ENCODE measurements at regions of chr21 and their contacts with region 1.

Region 1: GRCh38 chr21:28516991-28517592 is 475.6 kb downstream of the LTN1 start:
- DNase-seq: peak; percentile 88
- H3K4me3 ChIP-seq: peak overlapping the region; percentile 5
- H3K27ac ChIP-seq: no peak overlapping the region
- H3K4me1 ChIP-seq: peaks cover 23% of the 10 kb centered on the region
- CTCF ChIP-seq: peak; percentile 89

Region 2: GRCh38 chr21:28480470-28480869 is 36.6 kb before region 1 on chr21:
- CTCF ChIA-PET with region 1: no interaction called
- POLR2A ChIA-PET with region 1: no interaction called
- intact Hi-C with region 1: no loop called
- DNase-seq: no peak
- H3K4me3 ChIP-seq: no peak overlapping the region
- H3K27ac ChIP-seq: no peak overlapping the region
- H3K4me1 ChIP-seq: no peaks in the 10 kb centered on the region
- CTCF ChIP-seq: no peak

Region 3: DNA sequence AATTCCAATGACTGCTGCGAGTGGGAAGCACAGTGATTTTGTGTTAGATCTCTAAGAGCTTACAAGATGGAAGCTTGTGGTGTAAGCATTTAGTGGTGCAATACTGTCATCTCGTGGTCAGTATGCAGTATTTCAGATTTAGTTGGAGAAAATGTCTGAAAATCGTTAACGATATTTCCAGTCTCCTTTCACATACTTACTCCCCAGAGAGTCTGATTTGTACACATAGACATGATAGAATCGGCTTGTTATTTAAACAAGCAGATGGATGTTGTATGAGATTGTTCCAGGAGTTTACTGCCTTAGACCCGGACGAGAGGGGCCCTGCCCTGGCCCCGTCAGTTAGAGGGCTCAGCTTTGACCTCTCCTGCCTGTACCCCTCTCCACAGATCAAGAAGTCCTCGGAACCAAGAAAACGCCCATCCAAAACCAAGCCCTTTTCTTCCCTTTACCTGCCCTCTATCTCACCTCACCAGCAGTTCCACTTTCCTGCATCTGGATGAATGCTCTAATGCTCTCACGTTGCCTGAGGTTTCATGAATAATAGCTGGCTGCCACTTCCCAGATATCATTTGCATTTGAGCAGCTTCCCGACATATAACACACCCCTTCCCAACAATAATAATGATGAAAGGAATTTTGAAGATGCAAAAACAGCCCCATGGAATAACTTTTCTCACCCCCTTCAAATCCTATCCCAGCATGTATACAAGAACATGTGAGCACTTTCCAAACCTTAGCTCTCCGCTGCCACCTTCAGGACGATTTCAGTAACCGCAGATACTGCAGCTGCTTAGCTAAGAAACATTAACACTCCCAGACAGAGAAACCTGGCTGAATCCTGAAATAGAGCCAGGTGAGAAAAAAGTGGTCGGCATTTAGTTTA is 228.3 kb after region 1 on chr21:
- CTCF ChIA-PET with region 1: interaction called, 5 read pairs
- POLR2A ChIA-PET with region 1: interaction called, 3 read pairs
- intact Hi-C with region 1: loop called (anchors 1 kb)
- DNase-seq: peak; percentile 79
- H3K4me3 ChIP-seq: peak overlapping the region; percentile 41
- H3K27ac ChIP-seq: no peak overlapping the region
- H3K4me1 ChIP-seq: peaks cover 5% of the 10 kb centered on the region
- CTCF ChIP-seq: peak; percentile 89

Region 4: GRCh38 chr21:28943631-28944030 is 426.5 kb after region 1 on chr21:
- CTCF ChIA-PET with region 1: no interaction called
- POLR2A ChIA-PET with region 1: no interaction called
- intact Hi-C with region 1: loop called (anchors 10 kb)
- DNase-seq: no peak
- H3K4me3 ChIP-seq: no peak overlapping the region
- H3K27ac ChIP-seq: no peak overlapping the region
- H3K4me1 ChIP-seq: no peaks in the 10 kb centered on the region
- CTCF ChIP-seq: no peak